ENCODE measurements at regions of chr4 and their contacts with region 1.

Region 1: DNA sequence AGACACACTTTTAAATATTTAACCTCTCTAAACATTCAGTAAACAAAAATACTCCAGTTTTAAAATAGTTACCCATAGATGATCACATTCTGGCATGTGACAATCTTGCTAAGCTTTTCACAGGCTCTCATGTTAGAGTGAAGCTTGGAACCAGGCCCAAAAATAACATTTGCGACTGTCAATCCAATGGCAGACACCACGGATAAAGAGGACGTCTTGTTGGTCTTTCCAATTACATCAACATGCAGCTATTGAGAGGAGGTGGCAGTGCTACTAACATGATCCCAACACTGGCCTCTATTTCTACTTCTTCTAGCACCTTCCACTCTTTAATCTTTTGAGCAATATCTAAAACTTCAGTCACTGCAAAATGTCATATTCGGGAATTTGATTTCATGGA is 970.8 kb upstream of the TENM3 start:
- DNase-seq: no peak

Region 2: GRCh38 chr4:181293014-181293413 is 20.6 kb after region 1 on chr4:
- intact Hi-C with region 1: loop called (anchors 1 kb)
- DNase-seq: no peak

Region 3: GRCh38 chr4:181312066-181312465 is 39.6 kb after region 1 on chr4:
- intact Hi-C with region 1: loop called (anchors 5 kb)
- DNase-seq: no peak

Measured in cardiac septum (tissue), 1 donor.